A549 (cell line): ENCODE measurements at regions of chr6 and their contacts with region 1.

Region 1: GRCh38 chr6:28368522-28368921 is 18.8 kb downstream of the ZKSCAN3 start:
- DNase-seq: no peak
- ATAC-seq: no peak
- H3K4me3 ChIP-seq: no peak overlapping the region
- H3K27ac ChIP-seq: no peak overlapping the region
- H3K4me1 ChIP-seq: no peaks in the 10 kb centered on the region
- CTCF ChIP-seq: no peak
- EP300 ChIP-seq: no peak
- POLR2A ChIP-seq: no peak
- RAD21 ChIP-seq: no peak

Region 2: GRCh38 chr6:27157459-27158315 is 1210.8 kb before region 1 on chr6:
- CTCF ChIA-PET with region 1: no interaction called
- POLR2A ChIA-PET with region 1: interaction called, 16 read pairs
- DNase-seq: peak; percentile 52 to 87
- ATAC-seq: peak; percentile 88 to 89
- H3K4me3 ChIP-seq: peak overlapping the region; percentile 66
- H3K27ac ChIP-seq: peak overlapping the region; percentile 52 to 71; a peak in 5 of 6 replicates
- H3K4me1 ChIP-seq: peaks cover 3% of the 10 kb centered on the region; the same call in 1 of the 3 replicates
- CTCF ChIP-seq: peak; percentile 28; the same call in 2 of the 3 replicates
- EP300 ChIP-seq: no peak
- POLR2A ChIP-seq: no peak
- RAD21 ChIP-seq: no peak